H1 (cell line): ENCODE measurements at regions of chr4 and their contacts with region 1.

Region 1: DNA sequence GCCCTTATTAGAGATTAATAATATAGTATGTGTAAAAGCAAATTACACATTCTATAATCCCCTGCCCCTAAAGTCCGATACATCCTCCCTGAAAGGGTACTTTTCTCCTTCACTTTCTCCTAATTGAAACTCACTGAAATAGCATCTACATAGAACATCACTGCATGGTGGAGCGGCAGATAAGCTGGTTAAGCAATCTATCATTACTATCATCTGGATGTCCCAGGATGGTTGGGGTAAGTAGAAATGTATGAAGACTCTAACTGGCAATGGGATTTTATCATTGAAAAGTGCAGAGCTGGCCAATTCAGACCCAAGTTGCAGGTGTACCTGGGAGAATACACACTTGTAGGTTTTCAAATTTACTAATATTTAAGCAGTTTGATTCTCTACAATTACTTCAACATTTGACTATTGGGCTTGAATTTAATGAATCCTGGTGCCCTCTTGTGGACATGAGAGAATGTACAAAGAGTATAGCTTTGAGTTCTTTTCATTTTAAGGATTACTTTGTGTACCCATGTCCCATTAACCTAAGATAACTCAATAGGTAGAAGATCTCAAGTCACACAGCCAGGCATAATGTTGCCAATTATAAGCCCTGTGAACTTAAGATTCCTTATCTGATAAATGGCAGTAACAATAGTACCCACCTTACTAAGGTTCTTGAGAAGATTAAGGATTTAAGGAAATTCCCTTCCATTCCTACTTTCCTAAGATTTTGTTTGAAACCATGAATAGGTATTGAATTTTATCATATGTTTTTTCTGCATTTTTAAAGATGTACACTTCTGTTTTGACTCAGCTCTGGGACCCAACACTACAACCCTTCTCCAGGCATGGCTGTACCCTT is 69.8 kb downstream of the SHROOM3 start:
- DNase-seq: no peak
- H3K4me3 ChIP-seq: no peak overlapping the region
- H3K27ac ChIP-seq: no peak overlapping the region
- H3K4me1 ChIP-seq: no peaks in the 10 kb centered on the region
- H3K27me3 ChIP-seq: no peaks in the 10 kb centered on the region
- CTCF ChIP-seq: peak in 2 of 3 experiments; percentile 38 to 57; a peak in 2 of 4 replicates
- EP300 ChIP-seq: no peak
- POLR2A ChIP-seq: no peak
- RAD21 ChIP-seq: peak; percentile 70 to 73

Region 2: GRCh38 chr4:75844151-75844662 is 660.6 kb before region 1 on chr4:
- CTCF ChIA-PET with region 1: no interaction called
- POLR2A ChIA-PET with region 1: no interaction called
- DNase-seq: no peak
- H3K4me3 ChIP-seq: no peak overlapping the region
- H3K27ac ChIP-seq: no peak overlapping the region
- H3K4me1 ChIP-seq: peaks cover 0 to 8% (median 4%) of the 10 kb centered on the region in 4 experiments; a peak in 3 of 7 replicates
- H3K27me3 ChIP-seq: peaks cover 0 to 2% (median 0%) of the 10 kb centered on the region in 4 experiments; a peak in 1 of 7 replicates
- CTCF ChIP-seq: no peak
- EP300 ChIP-seq: no peak
- POLR2A ChIP-seq: no peak
- RAD21 ChIP-seq: no peak

Region 3: GRCh38 chr4:76441881-76442280 is 63.0 kb before region 1 on chr4:
- CTCF ChIA-PET with region 1: interaction called, 314 read pairs
- POLR2A ChIA-PET with region 1: interaction called, 13 read pairs
- DNase-seq: no peak
- H3K4me3 ChIP-seq: no peak overlapping the region
- H3K27ac ChIP-seq: no peak overlapping the region
- H3K4me1 ChIP-seq: peaks cover 0 to 3% (median 0%) of the 10 kb centered on the region in 4 experiments; a peak in 1 of 7 replicates
- H3K27me3 ChIP-seq: no peaks in the 10 kb centered on the region
- CTCF ChIP-seq: no peak
- EP300 ChIP-seq: no peak
- POLR2A ChIP-seq: no peak
- RAD21 ChIP-seq: no peak

Region 4: DNA sequence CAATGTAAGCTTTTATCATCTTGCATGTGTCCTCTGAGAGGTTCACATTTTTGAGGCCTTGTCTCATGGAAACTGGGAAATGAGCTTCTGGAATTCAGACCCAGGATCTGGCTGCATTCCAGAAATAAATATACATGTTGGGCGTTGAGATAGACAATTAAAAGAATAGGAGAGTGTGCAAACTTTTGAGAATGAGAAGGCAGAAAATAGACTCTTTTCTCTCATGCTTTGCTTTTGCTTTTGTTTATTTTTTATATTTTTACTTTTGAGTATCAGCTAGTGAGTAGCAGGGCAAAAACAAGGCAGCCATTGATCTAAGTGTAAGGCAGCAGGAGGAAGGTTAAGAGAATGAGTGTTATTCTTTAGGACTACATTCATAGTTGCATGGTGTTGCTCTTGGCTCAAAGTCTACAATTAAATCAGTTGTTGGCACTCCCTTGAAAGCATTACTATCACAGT is 57.4 kb before region 1 on chr4:
- CTCF ChIA-PET with region 1: interaction called, 21 read pairs
- POLR2A ChIA-PET with region 1: interaction called, 4 read pairs
- DNase-seq: no peak
- H3K4me3 ChIP-seq: no peak overlapping the region
- H3K27ac ChIP-seq: no peak overlapping the region
- H3K4me1 ChIP-seq: peaks cover 0 to 2% (median 1%) of the 10 kb centered on the region in 4 experiments; a peak in 2 of 7 replicates
- H3K27me3 ChIP-seq: no peaks in the 10 kb centered on the region
- CTCF ChIP-seq: no peak
- EP300 ChIP-seq: no peak
- POLR2A ChIP-seq: no peak
- RAD21 ChIP-seq: no peak

Region 5: DNA sequence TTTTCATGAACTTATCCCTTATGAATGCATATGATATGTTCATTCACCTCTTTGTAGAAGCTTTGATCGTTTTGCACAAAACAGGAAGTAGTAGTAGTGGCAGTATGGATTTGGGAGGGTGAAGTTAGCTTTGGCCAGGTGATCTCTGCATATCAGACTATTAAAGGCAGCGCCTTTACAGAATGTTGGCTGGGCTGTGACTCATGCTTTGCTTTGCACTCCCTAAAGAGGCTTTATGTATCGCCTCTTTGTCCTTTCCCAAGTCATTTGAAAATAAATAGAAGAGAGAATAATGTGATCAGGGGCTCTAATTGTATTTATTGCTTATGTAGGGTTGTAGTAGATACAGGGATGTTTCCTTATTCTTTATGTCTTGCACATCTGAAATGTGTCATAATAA is 19.4 kb before region 1 on chr4:
- CTCF ChIA-PET with region 1: interaction called, 13 read pairs
- POLR2A ChIA-PET with region 1: interaction called, 4 read pairs
- DNase-seq: peak in 1 of 2 experiments; percentile 13
- H3K4me3 ChIP-seq: peak overlapping the region in 1 of 4 experiments; percentile 2; a peak in 1 of 8 replicates
- H3K27ac ChIP-seq: no peak overlapping the region
- H3K4me1 ChIP-seq: peaks cover 3 to 15% (median 11%) of the 10 kb centered on the region in 4 experiments; a peak in 5 of 7 replicates
- H3K27me3 ChIP-seq: no peaks in the 10 kb centered on the region
- CTCF ChIP-seq: no peak
- EP300 ChIP-seq: no peak
- POLR2A ChIP-seq: no peak
- RAD21 ChIP-seq: no peak

Region 6: GRCh38 chr4:76733068-76733771 is 228.4 kb after region 1 on chr4:
- CTCF ChIA-PET with region 1: interaction called, 13 read pairs
- POLR2A ChIA-PET with region 1: no interaction called
- DNase-seq: peak; percentile 57 to 64
- H3K4me3 ChIP-seq: no peak overlapping the region
- H3K27ac ChIP-seq: no peak overlapping the region
- H3K4me1 ChIP-seq: peaks cover 5 to 24% (median 16%) of the 10 kb centered on the region in 4 experiments
- H3K27me3 ChIP-seq: no peaks in the 10 kb centered on the region
- CTCF ChIP-seq: peak; percentile 65 to 77 (median 70)
- EP300 ChIP-seq: peak in 1 of 2 experiments; percentile 75; a peak in 1 of 3 replicates
- POLR2A ChIP-seq: no peak
- RAD21 ChIP-seq: peak; percentile 90 to 92